GM12878 (cell line): ENCODE measurements at regions of chr18 and their contacts with region 1.

Region 1: DNA sequence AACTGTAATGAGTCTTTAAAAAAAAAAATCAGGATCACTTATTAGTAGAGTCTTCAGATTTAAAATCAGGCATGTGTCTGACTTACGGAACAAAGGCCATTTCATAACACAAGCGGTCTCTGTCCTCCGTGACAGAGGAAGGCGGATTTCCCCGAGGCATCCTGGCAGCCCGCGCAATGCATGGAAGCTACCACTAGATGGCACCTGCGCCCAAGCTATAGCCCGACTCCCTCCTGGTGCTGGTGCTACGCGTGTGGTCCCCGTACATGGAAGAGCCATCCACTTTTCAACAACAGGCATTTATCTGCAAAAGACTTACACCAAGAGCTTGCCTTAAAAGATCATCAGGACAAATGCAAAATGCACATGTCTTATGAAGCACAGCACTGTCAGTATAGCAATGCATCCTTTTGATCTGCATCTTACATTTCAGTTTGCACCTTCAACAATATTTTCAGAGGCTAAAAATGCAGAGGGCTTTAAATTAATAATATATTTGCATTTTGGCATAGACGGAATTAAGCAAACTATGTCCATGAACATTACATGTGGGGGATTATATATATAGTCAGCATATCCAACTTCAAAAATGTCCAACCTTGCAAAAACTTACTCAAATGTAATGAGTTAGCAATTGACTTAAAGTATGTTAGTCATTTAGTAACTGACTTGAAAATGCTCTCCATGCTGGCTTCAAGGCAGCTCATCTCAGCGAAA is 96.0 kb downstream of the ZNF516 start:
- DNase-seq: peak; percentile 37
- ATAC-seq: peak; percentile 99
- H3K4me3 ChIP-seq: no peak overlapping the region
- H3K27ac ChIP-seq: no peak overlapping the region
- H3K4me1 ChIP-seq: no peaks in the 10 kb centered on the region
- H3K27me3 ChIP-seq: no peaks in the 10 kb centered on the region
- CTCF ChIP-seq: peak; percentile 95 to 98 (median 97); a peak in 5 of 6 replicates
- EP300 ChIP-seq: no peak
- POLR2A ChIP-seq: no peak
- RAD21 ChIP-seq: peak; percentile 94

Region 2: DNA sequence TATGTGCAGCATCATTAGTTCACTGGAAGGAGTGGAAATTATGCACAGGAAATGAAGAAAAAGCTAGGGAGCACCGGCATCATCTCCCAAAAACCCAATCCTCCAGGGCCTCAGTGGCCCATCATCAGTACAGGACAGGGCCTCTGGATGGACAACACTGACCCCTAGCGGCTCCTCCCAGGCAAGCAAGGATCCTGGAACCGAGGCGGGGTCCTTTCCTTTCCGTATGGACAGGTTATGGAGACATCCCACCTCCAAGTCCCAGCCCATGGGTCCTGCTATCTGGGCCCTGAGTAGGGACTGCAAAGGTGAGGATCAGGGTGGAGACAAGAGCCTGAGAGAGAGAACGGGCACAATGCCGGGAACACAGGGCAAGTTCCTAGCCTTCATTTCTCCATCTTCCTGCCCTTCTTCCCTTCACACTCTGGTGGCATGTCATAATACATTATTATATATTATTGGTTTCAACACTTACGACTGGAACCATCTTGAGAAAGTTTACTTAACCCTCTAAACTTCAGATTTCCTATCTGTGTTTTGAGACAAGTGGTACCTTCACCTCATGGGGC is 27.8 kb after region 1 on chr18:
- CTCF ChIA-PET with region 1: interaction called, 16 read pairs
- POLR2A ChIA-PET with region 1: no interaction called
- RAD21 ChIA-PET with region 1: no interaction called
- SMC1A ChIA-PET with region 1: interaction called, 6 read pairs
- in situ Hi-C with region 1: no loop called
- intact Hi-C with region 1: loop called (anchors 2 kb)
- DNase-seq: no peak
- ATAC-seq: peak; percentile 64
- H3K4me3 ChIP-seq: no peak overlapping the region
- H3K27ac ChIP-seq: no peak overlapping the region
- H3K4me1 ChIP-seq: no peaks in the 10 kb centered on the region
- H3K27me3 ChIP-seq: no peaks in the 10 kb centered on the region
- CTCF ChIP-seq: peak; percentile 44 to 52 (median 52); a peak in 5 of 6 replicates
- EP300 ChIP-seq: no peak
- POLR2A ChIP-seq: no peak
- RAD21 ChIP-seq: peak; percentile 65

Region 3: GRCh38 chr18:76604935-76605240 is 205.8 kb after region 1 on chr18:
- CTCF ChIA-PET with region 1: no interaction called
- POLR2A ChIA-PET with region 1: no interaction called
- RAD21 ChIA-PET with region 1: no interaction called
- SMC1A ChIA-PET with region 1: no interaction called
- in situ Hi-C with region 1: no loop called
- intact Hi-C with region 1: no loop called
- DNase-seq: no peak
- ATAC-seq: no peak
- H3K4me3 ChIP-seq: no peak overlapping the region
- H3K27ac ChIP-seq: no peak overlapping the region
- H3K4me1 ChIP-seq: no peaks in the 10 kb centered on the region
- H3K27me3 ChIP-seq: no peaks in the 10 kb centered on the region
- CTCF ChIP-seq: no peak
- EP300 ChIP-seq: no peak
- POLR2A ChIP-seq: no peak
- RAD21 ChIP-seq: no peak

Region 4: DNA sequence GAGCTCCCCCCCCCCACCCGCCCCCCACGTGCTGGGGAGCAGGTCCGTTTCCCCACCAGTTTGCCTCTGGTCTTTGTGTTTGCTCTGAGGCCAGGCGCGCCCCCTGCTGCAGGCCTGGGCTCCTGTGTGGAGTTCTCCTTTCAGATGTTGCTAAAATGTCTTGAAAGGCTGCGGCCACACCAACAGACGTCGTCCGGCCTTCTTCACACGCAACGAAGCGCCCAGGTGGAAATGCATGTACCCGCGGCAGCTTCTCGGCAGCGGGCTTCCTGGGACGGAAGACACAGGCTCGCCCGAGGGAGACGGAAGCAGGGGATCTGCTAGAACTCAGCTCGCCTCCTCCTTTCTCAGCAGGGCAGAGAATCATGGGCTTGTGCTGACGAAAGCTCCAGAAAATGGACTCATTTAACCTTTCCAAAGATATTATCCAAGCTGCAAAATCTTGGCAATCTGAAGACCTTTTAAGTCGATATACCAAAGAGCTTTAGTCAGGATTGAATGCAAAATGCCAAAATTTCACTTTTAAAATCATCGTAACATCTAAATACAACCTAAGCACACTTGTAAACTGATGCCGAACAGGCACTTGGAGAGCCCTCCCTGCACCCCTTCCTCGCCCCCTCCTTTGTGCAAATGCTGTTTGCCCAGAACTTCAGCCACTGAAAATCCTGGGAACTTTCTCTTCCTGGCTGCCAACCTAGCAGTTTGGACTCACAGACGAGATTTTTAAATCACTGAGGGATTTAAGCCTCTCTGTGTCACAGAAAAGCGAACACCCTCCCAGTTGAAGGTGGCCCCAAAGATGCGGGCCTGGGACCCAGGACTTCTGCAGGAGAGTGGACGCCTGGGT is 221.5 kb after region 1 on chr18:
- CTCF ChIA-PET with region 1: interaction called, 53 read pairs
- POLR2A ChIA-PET with region 1: no interaction called
- RAD21 ChIA-PET with region 1: interaction called, 3 read pairs
- SMC1A ChIA-PET with region 1: interaction called, 5 read pairs
- in situ Hi-C with region 1: no loop called
- intact Hi-C with region 1: loop called (anchors 1 kb)
- DNase-seq: peak; percentile 9
- ATAC-seq: peak; percentile 96
- H3K4me3 ChIP-seq: peak overlapping the region; percentile 43; the same call in 1 of the 2 replicates
- H3K27ac ChIP-seq: no peak overlapping the region
- H3K4me1 ChIP-seq: peaks cover 3% of the 10 kb centered on the region; the same call in 1 of the 2 replicates
- H3K27me3 ChIP-seq: peaks cover 0 to 4% of the 10 kb centered on the region in 2 experiments; a peak in 1 of 4 replicates
- CTCF ChIP-seq: peak; percentile 56 to 75 (median 69)
- EP300 ChIP-seq: no peak
- POLR2A ChIP-seq: no peak
- RAD21 ChIP-seq: peak; percentile 74

Region 5: DNA sequence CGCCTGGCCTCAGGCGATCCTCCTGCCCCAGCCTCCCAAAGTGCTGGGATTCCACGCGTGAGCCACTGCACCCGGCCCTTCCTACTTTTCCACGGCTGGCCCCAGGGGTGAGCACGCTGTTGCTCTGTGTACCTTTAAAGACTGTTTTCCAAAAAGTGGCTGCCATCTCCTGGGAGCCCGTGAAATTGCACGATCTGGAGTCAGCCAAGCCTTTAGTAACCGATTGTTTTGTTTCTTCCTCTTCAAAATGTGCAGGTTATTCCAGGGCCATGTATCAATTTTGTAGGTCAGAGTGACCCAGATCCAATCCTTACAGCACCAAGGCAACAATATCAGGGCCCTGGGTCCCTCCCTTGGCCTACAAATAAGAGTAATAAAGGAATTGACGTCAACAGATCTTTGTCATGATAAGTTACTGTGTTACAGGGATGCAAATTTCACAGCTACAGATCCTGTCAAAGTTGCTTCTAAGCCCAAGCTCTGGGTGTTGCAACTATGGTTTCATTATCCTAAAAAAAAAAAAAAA is 287.7 kb after region 1 on chr18:
- CTCF ChIA-PET with region 1: interaction called, 22 read pairs
- POLR2A ChIA-PET with region 1: no interaction called
- RAD21 ChIA-PET with region 1: interaction called, 8 read pairs
- SMC1A ChIA-PET with region 1: interaction called, 16 read pairs
- in situ Hi-C with region 1: no loop called
- intact Hi-C with region 1: loop called (anchors 1 kb)
- DNase-seq: peak; percentile 15
- ATAC-seq: peak; percentile 89
- H3K4me3 ChIP-seq: no peak overlapping the region
- H3K27ac ChIP-seq: no peak overlapping the region
- H3K4me1 ChIP-seq: no peaks in the 10 kb centered on the region
- H3K27me3 ChIP-seq: no peaks in the 10 kb centered on the region; a peak in 1 of 4 replicates
- CTCF ChIP-seq: peak; percentile 60 to 69 (median 62)
- EP300 ChIP-seq: no peak
- POLR2A ChIP-seq: no peak
- RAD21 ChIP-seq: peak; percentile 65